Activated CD8-positive, alpha-beta T cell treated with anti-CD3 and anti-CD28 coated beads for 36 hours (primary cell): ENCODE measurements at regions of chr7 and their contacts with region 1.

Region 1: DNA sequence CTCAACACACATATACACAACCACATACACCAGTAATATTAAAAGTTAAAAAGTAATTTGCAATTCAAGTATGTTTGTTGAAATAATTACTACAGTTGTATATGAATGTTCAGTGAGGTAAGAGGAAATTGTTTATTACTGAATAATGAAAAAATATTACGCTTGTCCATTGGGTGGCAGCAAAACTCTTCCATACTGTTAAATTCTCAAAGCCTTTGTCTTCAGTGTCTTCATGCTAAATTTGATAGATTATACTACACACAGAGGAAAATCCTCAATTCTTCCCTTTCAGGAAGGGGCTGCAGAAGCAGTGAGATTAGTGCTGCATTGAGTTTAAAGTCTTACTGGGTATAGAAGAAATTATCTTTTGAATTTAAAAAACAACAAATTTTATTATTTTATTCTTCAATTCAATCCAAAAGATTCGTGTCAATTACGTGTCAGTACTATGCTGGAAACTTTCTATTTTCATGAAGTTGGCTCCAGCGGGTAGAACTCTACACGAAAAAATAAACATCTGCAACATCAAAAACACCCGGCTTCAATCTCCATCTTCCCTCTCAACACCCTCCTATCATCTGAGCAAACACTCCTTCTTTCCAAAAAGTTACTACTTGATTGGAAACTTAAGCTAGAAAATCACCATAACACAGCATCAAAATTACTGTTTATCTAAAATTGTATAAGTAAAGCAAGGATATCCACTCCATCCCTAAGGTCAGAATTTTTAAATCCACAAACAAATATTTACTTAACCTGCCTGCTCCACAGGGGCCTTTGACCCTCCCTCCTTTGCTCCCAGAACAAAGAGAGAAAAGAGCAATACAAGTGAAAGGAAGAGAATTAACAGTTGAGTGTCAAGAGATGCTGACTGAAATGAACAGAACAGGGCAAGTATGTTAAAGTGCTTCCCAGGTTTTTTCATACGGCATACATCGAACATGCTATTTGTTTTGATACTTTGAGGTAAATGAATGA is 37.0 kb upstream of the TES start:
- DNase-seq: peak; percentile 27
- ATAC-seq: no peak
- H3K4me3 Mint-ChIP-seq: no peak overlapping the region
- H3K27ac Mint-ChIP-seq: no peak overlapping the region
- H3K4me1 Mint-ChIP-seq: no peaks in the 10 kb centered on the region
- H3K27me3 Mint-ChIP-seq: peaks cover 3% of the 10 kb centered on the region
- CTCF ChIP-seq: peak; percentile 76

Region 2: DNA sequence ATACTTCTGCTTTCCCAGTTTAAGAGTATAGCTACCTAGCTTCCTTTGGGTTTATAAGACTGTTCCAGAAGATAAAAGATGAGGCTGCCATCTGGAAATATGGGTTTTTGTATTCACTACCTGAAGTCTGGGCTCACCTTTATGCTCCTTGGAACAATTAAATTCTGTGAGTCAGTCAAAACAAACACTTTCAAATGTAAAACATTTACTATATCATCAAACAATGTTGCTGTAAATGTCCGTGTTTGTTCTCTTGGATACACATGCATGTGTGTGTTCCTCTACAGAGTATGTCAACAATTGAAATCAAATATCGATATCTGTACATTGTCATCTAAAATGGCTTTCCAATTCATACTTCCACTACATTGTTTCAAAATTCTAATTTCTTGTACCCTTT is 725.8 kb before region 1 on chr7:
- CTCF ChIA-PET with region 1: no interaction called
- POLR2A ChIA-PET with region 1: no interaction called
- intact Hi-C with region 1: no loop called
- DNase-seq: no peak
- ATAC-seq: no peak
- H3K4me3 Mint-ChIP-seq: no peak overlapping the region
- H3K27ac Mint-ChIP-seq: no peak overlapping the region
- H3K4me1 Mint-ChIP-seq: no peaks in the 10 kb centered on the region
- H3K27me3 Mint-ChIP-seq: peaks cover 2% of the 10 kb centered on the region
- CTCF ChIP-seq: no peak

Region 3: DNA sequence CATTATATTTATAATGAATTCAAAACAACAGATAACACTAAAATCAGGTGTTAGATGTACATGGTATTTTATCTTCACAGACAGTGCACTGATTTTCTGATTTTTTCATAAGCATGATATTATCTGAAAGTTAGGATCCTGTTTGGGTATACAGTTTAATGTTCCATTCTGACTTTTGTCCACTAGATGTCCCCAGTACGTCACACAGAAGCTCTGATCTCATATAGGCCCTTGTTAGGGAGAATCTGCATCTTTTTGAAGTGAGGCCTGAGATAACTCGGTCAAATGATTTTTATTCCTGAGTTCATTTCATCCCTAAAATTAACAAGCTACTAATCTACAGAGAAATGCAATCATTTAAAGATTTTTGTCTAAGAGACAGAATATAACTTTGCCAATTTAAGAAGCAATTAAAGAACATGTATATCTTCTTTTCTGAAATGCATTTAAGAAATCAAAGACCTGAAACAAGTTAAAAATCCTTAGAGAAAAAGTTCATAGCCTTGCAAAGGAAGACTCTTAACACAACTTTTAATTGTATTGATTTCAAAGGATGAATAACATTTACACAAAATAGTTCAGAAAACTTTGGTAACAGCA is 35.0 kb before region 1 on chr7:
- CTCF ChIA-PET with region 1: interaction called, 11 read pairs
- POLR2A ChIA-PET with region 1: no interaction called
- intact Hi-C with region 1: no loop called
- DNase-seq: peak; percentile 32
- ATAC-seq: peak; percentile 84
- H3K4me3 Mint-ChIP-seq: no peak overlapping the region
- H3K27ac Mint-ChIP-seq: no peak overlapping the region
- H3K4me1 Mint-ChIP-seq: peaks cover 9% of the 10 kb centered on the region
- H3K27me3 Mint-ChIP-seq: peaks cover 4% of the 10 kb centered on the region
- CTCF ChIP-seq: peak; percentile 71